CD4-positive, alpha-beta T cell (primary cell): ENCODE measurements at regions of chr5 and their contacts with region 1.

Region 1: DNA sequence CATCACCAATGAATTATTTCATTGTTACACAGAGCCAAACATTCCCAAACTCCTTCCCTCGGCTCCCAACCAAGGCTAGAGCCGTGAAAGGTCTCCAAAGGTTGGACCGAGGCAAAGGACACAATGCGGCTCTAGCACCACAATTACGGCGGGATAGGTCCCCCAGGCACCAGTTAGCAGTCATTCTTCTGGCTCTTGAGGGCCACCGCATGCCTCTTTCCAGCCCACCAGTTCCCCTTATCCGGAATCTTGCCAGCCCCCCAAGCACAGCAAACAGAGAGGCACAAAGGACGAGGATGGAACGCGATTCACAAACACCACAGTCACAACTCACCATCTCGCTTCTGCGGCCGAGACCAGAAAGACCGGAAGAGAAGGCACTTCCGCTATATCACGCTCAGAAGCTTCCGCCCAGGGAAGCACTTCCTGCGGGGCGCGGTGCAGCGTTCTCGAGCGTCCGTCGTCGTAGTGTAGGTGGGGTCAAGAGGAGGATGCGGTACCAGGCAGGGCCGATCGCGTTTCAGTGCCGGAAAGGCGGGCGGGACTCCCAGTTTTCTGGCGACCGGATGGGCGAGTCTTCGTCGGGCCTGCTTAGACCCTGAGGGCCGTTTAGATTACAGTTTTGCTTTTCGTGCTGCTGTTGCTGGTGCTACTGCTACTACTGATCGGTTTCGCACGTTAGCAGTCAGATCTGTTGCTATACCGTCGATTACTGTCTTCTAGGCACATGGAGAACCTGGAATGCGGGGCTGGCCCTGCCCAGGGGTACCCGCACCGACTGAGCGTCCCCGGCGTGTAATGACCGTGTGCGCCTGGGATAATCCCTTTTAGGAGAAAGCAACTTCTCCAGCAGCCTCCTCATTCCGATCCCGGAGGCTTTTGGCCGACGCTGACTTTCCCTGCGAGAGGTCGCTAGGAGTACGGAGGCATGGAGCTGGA is at the start of gene RPL37:
- DNase-seq: peak; percentile 84 to 96 (median 88)
- ATAC-seq: peak; percentile 82
- H3K4me3 ChIP-seq: peak within 1 kb of the TSS; percentile 84
- H3K4me3 Mint-ChIP-seq: peak within 1 kb of the TSS; percentile 95
- H3K27ac ChIP-seq: peak within 1 kb of the TSS; percentile 92 to 94
- H3K27ac Mint-ChIP-seq: peak within 1 kb of the TSS; percentile 97
- H3K4me1 ChIP-seq: peaks cover 45% of the 10 kb centered on the region
- H3K4me1 Mint-ChIP-seq: peaks cover 56% of the 10 kb centered on the region
- H3K27me3 ChIP-seq: no peaks in the 10 kb centered on the region
- H3K27me3 Mint-ChIP-seq: no peaks in the 10 kb centered on the region
- CTCF ChIP-seq: no peak
- total RNA-seq, gene RPL37: 2,845 to 2,986 TPM

Region 2: GRCh38 chr5:40404613-40405012 is 430.5 kb before region 1 on chr5:
- CTCF ChIA-PET with region 1: no interaction called
- POLR2A ChIA-PET with region 1: no interaction called
- intact Hi-C with region 1: loop called in 1 of 2 experiments (anchors 10 kb)
- DNase-seq: peak in 3 of 14 experiments; percentile 69 to 77 (median 71)
- ATAC-seq: peak; percentile 58
- H3K4me3 ChIP-seq: no peak overlapping the region
- H3K4me3 Mint-ChIP-seq: peak overlapping the region; percentile 49
- H3K27ac ChIP-seq: peak overlapping the region; percentile 74 to 91
- H3K27ac Mint-ChIP-seq: peak overlapping the region; percentile 87
- H3K4me1 ChIP-seq: peaks cover 51% of the 10 kb centered on the region
- H3K4me1 Mint-ChIP-seq: peaks cover 68% of the 10 kb centered on the region
- H3K27me3 ChIP-seq: no peaks in the 10 kb centered on the region
- H3K27me3 Mint-ChIP-seq: no peaks in the 10 kb centered on the region
- CTCF ChIP-seq: no peak

Region 3: GRCh38 chr5:40755407-40756365 is 79.4 kb before region 1 on chr5 and contains the start of gene TTC33:
- CTCF ChIA-PET with region 1: no interaction called
- POLR2A ChIA-PET with region 1: interaction called, 3 read pairs
- intact Hi-C with region 1: loop called (anchors 1 to 2 kb)
- DNase-seq: peak; percentile 86 to 96 (median 92)
- ATAC-seq: peak; percentile 80
- H3K4me3 ChIP-seq: peak within 1 kb of the TSS; percentile 89
- H3K4me3 Mint-ChIP-seq: no peak within 1 kb of the TSS
- H3K27ac ChIP-seq: peak within 1 kb of the TSS; percentile 87 to 89
- H3K27ac Mint-ChIP-seq: no peak within 1 kb of the TSS
- H3K4me1 ChIP-seq: peaks cover 14% of the 10 kb centered on the region
- H3K4me1 Mint-ChIP-seq: peaks cover 25% of the 10 kb centered on the region
- H3K27me3 ChIP-seq: no peaks in the 10 kb centered on the region
- H3K27me3 Mint-ChIP-seq: no peaks in the 10 kb centered on the region
- CTCF ChIP-seq: peak; percentile 51
- total RNA-seq, gene TTC33: 8.7 to 12.0 TPM

Region 4: GRCh38 chr5:40798012-40798855 is 36.9 kb before region 1 on chr5 and contains the start of gene PRKAA1:
- CTCF ChIA-PET with region 1: interaction called, 5 read pairs
- POLR2A ChIA-PET with region 1: interaction called, 18 read pairs
- intact Hi-C with region 1: loop called in 1 of 2 experiments (anchors 1 kb)
- DNase-seq: peak; percentile 80 to 96 (median 89)
- ATAC-seq: peak; percentile 93
- H3K4me3 ChIP-seq: peak within 1 kb of the TSS; percentile 95
- H3K4me3 Mint-ChIP-seq: peak within 1 kb of the TSS; percentile 94
- H3K27ac ChIP-seq: peak within 1 kb of the TSS; percentile 84 to 90
- H3K27ac Mint-ChIP-seq: peak within 1 kb of the TSS; percentile 85
- H3K4me1 ChIP-seq: peaks cover 16% of the 10 kb centered on the region
- H3K4me1 Mint-ChIP-seq: peaks cover 48% of the 10 kb centered on the region
- H3K27me3 ChIP-seq: no peaks in the 10 kb centered on the region
- H3K27me3 Mint-ChIP-seq: no peaks in the 10 kb centered on the region
- CTCF ChIP-seq: peak; percentile 71
- total RNA-seq, gene PRKAA1: 102 to 105 TPM

Region 5: GRCh38 chr5:40866291-40866690 is 31.2 kb after region 1 on chr5:
- CTCF ChIA-PET with region 1: no interaction called
- POLR2A ChIA-PET with region 1: no interaction called
- intact Hi-C with region 1: no loop called
- DNase-seq: no peak
- ATAC-seq: no peak
- H3K4me3 ChIP-seq: no peak overlapping the region
- H3K4me3 Mint-ChIP-seq: no peak overlapping the region
- H3K27ac ChIP-seq: no peak overlapping the region
- H3K27ac Mint-ChIP-seq: no peak overlapping the region
- H3K4me1 ChIP-seq: no peaks in the 10 kb centered on the region
- H3K4me1 Mint-ChIP-seq: no peaks in the 10 kb centered on the region
- H3K27me3 ChIP-seq: no peaks in the 10 kb centered on the region
- H3K27me3 Mint-ChIP-seq: no peaks in the 10 kb centered on the region
- CTCF ChIP-seq: no peak

Region 6: DNA sequence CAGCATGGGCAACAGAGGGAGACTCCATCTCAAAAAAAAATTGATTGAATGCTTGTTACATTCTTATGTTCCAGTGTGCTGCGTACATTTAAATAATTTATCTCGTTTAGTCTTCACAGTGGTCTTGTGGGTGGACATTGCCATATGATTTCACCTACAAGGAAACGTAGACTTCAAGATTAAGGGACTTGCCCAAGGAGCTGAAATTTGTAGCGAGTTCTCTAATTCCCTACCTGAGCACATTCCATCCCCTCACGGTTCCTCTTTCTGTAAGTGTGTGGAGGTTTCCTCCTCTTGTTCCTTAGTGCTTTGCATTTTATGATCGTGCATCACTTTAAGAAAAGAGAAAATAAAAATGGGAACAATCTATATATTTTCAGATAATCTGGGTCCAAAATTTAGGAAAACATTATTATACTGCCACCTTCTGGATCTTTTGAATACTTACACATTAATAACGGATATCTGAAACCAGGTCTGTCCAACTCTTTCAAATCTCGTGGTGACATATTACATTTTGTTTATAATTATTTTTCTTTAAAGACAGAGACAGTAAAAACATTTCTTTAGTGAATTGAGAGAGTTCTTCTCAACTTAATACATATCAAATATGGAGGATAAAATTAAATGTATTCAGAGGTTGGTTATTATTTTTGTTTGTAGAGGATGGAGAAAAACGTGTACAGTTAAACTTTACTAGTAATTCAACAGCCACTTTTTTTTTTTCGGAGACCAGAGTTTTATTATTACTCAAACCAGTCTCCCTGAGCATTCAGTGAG is 44.2 kb after region 1 on chr5:
- CTCF ChIA-PET with region 1: no interaction called
- POLR2A ChIA-PET with region 1: no interaction called
- intact Hi-C with region 1: loop called in 1 of 2 experiments (anchors 2 kb)
- DNase-seq: peak in 3 of 14 experiments; percentile 31 to 45 (median 35)
- ATAC-seq: peak; percentile 46
- H3K4me3 ChIP-seq: no peak overlapping the region
- H3K4me3 Mint-ChIP-seq: no peak overlapping the region
- H3K27ac ChIP-seq: no peak overlapping the region
- H3K27ac Mint-ChIP-seq: no peak overlapping the region
- H3K4me1 ChIP-seq: no peaks in the 10 kb centered on the region
- H3K4me1 Mint-ChIP-seq: no peaks in the 10 kb centered on the region
- H3K27me3 ChIP-seq: no peaks in the 10 kb centered on the region
- H3K27me3 Mint-ChIP-seq: peaks cover 5% of the 10 kb centered on the region
- CTCF ChIP-seq: peak; percentile 77

Region 7: GRCh38 chr5:41903892-41904799 is 1069.0 kb after region 1 on chr5 and contains the start of gene RIMOC1:
- CTCF ChIA-PET with region 1: no interaction called
- POLR2A ChIA-PET with region 1: interaction called, 7 read pairs
- intact Hi-C with region 1: loop called in 1 of 2 experiments (anchors 5 kb)
- DNase-seq: peak; percentile 93 to 99 (median 96)
- ATAC-seq: peak; percentile 85
- H3K4me3 ChIP-seq: peak within 1 kb of the TSS; percentile 86
- H3K4me3 Mint-ChIP-seq: peak within 1 kb of the TSS; percentile 98
- H3K27ac ChIP-seq: peak within 1 kb of the TSS; percentile 89 to 90
- H3K27ac Mint-ChIP-seq: peak within 1 kb of the TSS; percentile 99
- H3K4me1 ChIP-seq: peaks cover 20% of the 10 kb centered on the region
- H3K4me1 Mint-ChIP-seq: peaks cover 46% of the 10 kb centered on the region
- H3K27me3 ChIP-seq: no peaks in the 10 kb centered on the region
- H3K27me3 Mint-ChIP-seq: no peaks in the 10 kb centered on the region
- CTCF ChIP-seq: no peak
- total RNA-seq, gene RIMOC1: 9.3 to 10.3 TPM

Region 8: DNA sequence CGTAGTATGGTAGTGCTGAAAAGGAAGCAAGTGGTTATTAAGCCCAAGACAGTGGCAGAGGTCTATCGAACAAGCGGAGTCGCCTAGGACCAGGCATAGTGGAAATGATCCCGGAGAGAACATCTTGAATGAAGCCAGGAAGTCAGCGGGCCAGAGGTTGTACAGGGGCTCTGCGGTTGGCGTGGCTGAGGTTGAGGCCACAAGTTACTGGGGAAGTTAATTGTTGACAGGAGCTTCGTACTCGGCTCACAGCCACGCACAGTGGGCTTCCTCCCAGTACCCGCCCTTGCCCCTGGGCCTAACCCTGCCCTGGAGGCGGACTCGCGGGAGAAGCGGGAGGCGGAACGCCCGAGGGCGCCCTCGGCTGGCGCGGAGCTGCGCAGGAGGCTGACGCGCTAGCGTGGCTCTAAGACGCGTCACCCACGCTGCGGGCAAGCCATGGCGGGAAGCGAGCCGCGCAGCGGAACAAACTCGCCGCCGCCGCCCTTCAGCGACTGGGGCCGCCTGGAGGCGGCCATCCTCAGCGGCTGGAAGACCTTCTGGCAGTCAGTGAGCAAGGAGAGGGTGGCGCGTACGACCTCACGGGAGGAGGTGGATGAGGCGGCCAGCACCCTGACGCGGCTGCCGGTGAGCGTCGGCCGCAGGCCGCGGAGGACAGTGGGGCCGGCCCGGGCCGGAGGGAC is 1089.9 kb after region 1 on chr5 and contains the start of gene FBXO4:
- CTCF ChIA-PET with region 1: no interaction called
- POLR2A ChIA-PET with region 1: no interaction called
- intact Hi-C with region 1: loop called in 1 of 2 experiments (anchors 5 kb)
- DNase-seq: peak; percentile 76 to 96 (median 86)
- ATAC-seq: peak; percentile 95
- H3K4me3 ChIP-seq: peak within 1 kb of the TSS; percentile 81
- H3K4me3 Mint-ChIP-seq: peak within 1 kb of the TSS; percentile 87
- H3K27ac ChIP-seq: peak within 1 kb of the TSS; percentile 93 to 95
- H3K27ac Mint-ChIP-seq: peak within 1 kb of the TSS; percentile 93
- H3K4me1 ChIP-seq: peaks cover 20% of the 10 kb centered on the region
- H3K4me1 Mint-ChIP-seq: peaks cover 29% of the 10 kb centered on the region
- H3K27me3 ChIP-seq: no peaks in the 10 kb centered on the region
- H3K27me3 Mint-ChIP-seq: no peaks in the 10 kb centered on the region
- CTCF ChIP-seq: peak; percentile 71
- total RNA-seq, gene FBXO4: 7.0 to 8.1 TPM